Activated CD8-positive, alpha-beta T cell treated with anti-CD3 and anti-CD28 coated beads, Interleukin-2, amount 10 ng/mL, durations not matched to agents 7 days and 5 days (primary cell): ENCODE measurements at regions of chr10 and their contacts with region 1.

Region 1: GRCh38 chr10:124741281-124741921 is 2.8 kb downstream of the FAM53B start:
- DNase-seq: peak; percentile 84
- ATAC-seq: peak; percentile 61
- H3K4me3 Mint-ChIP-seq: peak overlapping the region; percentile 58
- H3K27ac Mint-ChIP-seq: peak overlapping the region; percentile 33
- H3K4me1 Mint-ChIP-seq: peaks cover 69% of the 10 kb centered on the region
- H3K27me3 Mint-ChIP-seq: peaks cover 6% of the 10 kb centered on the region

Region 2: GRCh38 chr10:124539935-124540641 is 201.3 kb before region 1 on chr10:
- CTCF ChIA-PET with region 1: interaction called, 34 read pairs
- POLR2A ChIA-PET with region 1: no interaction called
- DNase-seq: peak; percentile 64
- ATAC-seq: peak; percentile 76
- H3K4me3 Mint-ChIP-seq: no peak overlapping the region
- H3K27ac Mint-ChIP-seq: no peak overlapping the region
- H3K4me1 Mint-ChIP-seq: peaks cover 9% of the 10 kb centered on the region
- H3K27me3 Mint-ChIP-seq: no peaks in the 10 kb centered on the region

Region 3: DNA sequence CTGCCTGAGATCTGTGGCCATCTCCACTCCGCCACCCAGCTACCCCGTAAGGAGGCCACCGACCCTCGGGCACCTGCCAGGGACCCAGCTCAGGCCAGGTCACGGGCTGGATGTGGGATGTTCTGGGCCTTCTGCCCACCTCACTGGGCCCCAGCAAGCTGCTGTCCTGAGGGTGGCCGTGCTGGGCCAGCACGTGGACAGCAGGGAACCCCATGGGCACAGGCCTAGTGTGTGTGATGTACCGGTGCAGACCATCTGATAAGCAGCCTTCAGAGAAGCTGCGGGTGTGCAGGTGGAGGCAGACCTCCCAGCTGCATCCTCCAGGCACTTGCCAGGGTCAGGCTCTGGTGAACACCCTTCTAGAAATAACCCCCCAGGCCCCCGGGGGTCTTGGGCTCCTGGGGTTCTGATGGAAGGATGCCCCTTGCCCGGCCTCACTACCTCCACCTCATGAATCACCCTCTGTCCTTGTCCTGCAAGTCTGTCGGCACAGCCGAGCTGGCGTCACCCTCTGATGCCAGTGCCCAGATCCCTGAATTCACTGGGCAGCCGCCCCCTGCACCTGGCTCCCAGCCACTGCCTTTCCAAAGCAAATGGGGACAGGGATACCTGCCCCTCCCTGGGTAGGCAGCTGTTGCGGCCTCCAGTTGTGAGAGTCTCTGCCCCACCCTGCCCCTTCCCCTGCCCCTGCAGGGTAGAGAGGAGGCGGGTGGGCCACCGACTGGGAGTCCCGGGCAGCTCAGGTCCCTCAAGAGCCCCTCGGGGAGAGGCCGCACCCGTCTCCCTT is 137.0 kb before region 1 on chr10:
- CTCF ChIA-PET with region 1: no interaction called
- POLR2A ChIA-PET with region 1: no interaction called
- DNase-seq: no peak
- ATAC-seq: no peak
- H3K4me3 Mint-ChIP-seq: no peak overlapping the region
- H3K27ac Mint-ChIP-seq: no peak overlapping the region
- H3K4me1 Mint-ChIP-seq: no peaks in the 10 kb centered on the region
- H3K27me3 Mint-ChIP-seq: no peaks in the 10 kb centered on the region

Region 4: GRCh38 chr10:124647421-124648130 is 93.8 kb before region 1 on chr10:
- CTCF ChIA-PET with region 1: interaction called, 63 read pairs
- POLR2A ChIA-PET with region 1: interaction called, 4 read pairs
- DNase-seq: peak; percentile 87
- ATAC-seq: peak; percentile 80
- H3K4me3 Mint-ChIP-seq: peak overlapping the region; percentile 70
- H3K27ac Mint-ChIP-seq: peak overlapping the region; percentile 92
- H3K4me1 Mint-ChIP-seq: peaks cover 78% of the 10 kb centered on the region
- H3K27me3 Mint-ChIP-seq: no peaks in the 10 kb centered on the region

Region 5: DNA sequence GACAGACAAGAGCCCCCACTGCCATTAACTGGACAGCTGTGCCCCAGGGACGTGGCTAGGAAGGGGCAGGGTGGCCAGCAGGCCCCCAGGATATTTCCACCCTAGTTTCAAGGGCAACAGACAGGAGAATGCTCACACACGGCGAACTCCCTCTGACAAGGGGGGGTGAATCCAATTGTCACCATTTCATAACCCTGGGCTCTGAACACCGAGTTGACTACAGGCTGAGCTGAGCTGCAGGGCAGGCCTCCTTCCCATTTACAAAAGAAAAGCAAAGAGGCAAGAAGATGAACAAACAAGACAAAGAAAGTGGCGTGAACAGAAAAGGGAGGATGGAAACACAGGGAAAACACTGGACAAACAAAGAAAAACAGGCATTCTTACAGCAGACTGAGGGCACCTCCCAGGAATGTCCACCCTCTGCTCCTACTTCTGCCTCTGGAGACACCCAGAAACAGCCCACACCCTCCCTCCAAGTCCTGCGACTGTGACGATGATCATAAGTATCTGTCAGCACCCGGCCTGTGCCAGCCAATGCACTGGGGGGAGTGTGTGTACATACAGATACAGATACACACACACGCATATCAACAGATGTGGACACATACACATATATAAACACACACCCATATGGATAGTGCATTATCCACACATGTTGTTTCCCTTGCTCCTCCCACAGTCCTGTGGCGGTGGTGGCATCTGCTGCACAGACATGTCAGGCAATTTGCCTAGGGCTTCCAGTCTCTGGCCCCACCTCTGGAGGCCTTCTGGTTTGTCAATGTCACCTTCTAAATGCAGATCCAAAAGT is 63.4 kb before region 1 on chr10:
- CTCF ChIA-PET with region 1: interaction called, 12 read pairs
- POLR2A ChIA-PET with region 1: no interaction called
- DNase-seq: no peak
- ATAC-seq: peak; percentile 50
- H3K4me3 Mint-ChIP-seq: peak overlapping the region; percentile 56
- H3K27ac Mint-ChIP-seq: peak overlapping the region; percentile 84
- H3K4me1 Mint-ChIP-seq: peaks cover 55% of the 10 kb centered on the region
- H3K27me3 Mint-ChIP-seq: no peaks in the 10 kb centered on the region

Region 6: DNA sequence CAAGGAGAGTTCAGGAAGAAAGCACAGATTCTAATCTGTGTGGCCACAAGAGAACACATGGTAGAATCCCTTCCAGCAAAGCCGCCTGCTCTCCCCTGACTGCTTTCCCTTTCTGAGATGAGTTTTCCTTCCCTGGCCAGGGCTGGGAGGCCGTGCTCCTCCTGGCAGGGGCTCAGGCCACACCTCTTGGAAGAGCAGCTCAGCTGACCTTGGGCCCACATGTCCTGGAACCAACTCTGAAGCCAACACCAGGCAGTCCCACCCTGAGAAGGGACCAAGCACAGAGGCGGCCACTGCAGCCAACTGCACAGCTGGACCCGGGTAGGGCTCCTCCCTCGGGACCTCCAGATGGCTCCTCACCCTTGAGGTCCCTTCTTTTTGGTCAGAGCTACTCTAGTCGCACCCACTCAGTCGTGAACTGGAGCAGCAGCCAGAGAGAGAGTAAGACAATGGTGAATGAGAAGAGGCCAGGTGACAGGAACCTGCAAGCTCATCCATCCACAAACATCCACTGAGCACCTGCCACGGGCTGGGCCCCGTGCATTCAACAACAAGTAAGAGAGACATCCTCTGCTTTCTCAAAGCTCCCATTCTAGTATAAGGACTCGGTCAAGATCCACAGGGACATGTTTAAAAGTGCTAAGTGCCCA is 37.5 kb before region 1 on chr10:
- CTCF ChIA-PET with region 1: interaction called, 67 read pairs
- POLR2A ChIA-PET with region 1: interaction called, 6 read pairs
- DNase-seq: no peak
- ATAC-seq: no peak
- H3K4me3 Mint-ChIP-seq: no peak overlapping the region
- H3K27ac Mint-ChIP-seq: peak overlapping the region; percentile 86
- H3K4me1 Mint-ChIP-seq: peaks cover 88% of the 10 kb centered on the region
- H3K27me3 Mint-ChIP-seq: no peaks in the 10 kb centered on the region

Region 7: GRCh38 chr10:124755581-124755980 is 14.2 kb after region 1 on chr10:
- CTCF ChIA-PET with region 1: interaction called, 15 read pairs
- POLR2A ChIA-PET with region 1: no interaction called
- DNase-seq: no peak
- ATAC-seq: no peak
- H3K4me3 Mint-ChIP-seq: no peak overlapping the region
- H3K27ac Mint-ChIP-seq: no peak overlapping the region
- H3K4me1 Mint-ChIP-seq: peaks cover under 1% of the 10 kb centered on the region
- H3K27me3 Mint-ChIP-seq: no peaks in the 10 kb centered on the region

Region 8: GRCh38 chr10:125076891-125077541 is 335.6 kb after region 1 on chr10:
- CTCF ChIA-PET with region 1: no interaction called
- POLR2A ChIA-PET with region 1: no interaction called
- DNase-seq: no peak
- ATAC-seq: no peak
- H3K4me3 Mint-ChIP-seq: no peak overlapping the region
- H3K27ac Mint-ChIP-seq: no peak overlapping the region
- H3K4me1 Mint-ChIP-seq: no peaks in the 10 kb centered on the region
- H3K27me3 Mint-ChIP-seq: peaks cover 2% of the 10 kb centered on the region